Ascending aorta (tissue), 2 donors: ENCODE measurements at regions of chr7 and their contacts with region 1.

Region 1: GRCh38 chr7:75994388-75995051 is at the start of gene TMEM120A:
- DNase-seq: peak; percentile 84 to 98
- H3K4me3 ChIP-seq: peak within 1 kb of the TSS; percentile 92 to 93
- H3K27ac ChIP-seq: peak within 1 kb of the TSS; percentile 99 to 100
- H3K4me1 ChIP-seq: peaks cover 10 to 25% of the 10 kb centered on the region in 2 donors
- H3K27me3 ChIP-seq: no peaks in the 10 kb centered on the region
- CTCF ChIP-seq: peak; percentile 29 to 42 (median 31)
- total RNA-seq, gene TMEM120A: 24.2 TPM

Region 2: DNA sequence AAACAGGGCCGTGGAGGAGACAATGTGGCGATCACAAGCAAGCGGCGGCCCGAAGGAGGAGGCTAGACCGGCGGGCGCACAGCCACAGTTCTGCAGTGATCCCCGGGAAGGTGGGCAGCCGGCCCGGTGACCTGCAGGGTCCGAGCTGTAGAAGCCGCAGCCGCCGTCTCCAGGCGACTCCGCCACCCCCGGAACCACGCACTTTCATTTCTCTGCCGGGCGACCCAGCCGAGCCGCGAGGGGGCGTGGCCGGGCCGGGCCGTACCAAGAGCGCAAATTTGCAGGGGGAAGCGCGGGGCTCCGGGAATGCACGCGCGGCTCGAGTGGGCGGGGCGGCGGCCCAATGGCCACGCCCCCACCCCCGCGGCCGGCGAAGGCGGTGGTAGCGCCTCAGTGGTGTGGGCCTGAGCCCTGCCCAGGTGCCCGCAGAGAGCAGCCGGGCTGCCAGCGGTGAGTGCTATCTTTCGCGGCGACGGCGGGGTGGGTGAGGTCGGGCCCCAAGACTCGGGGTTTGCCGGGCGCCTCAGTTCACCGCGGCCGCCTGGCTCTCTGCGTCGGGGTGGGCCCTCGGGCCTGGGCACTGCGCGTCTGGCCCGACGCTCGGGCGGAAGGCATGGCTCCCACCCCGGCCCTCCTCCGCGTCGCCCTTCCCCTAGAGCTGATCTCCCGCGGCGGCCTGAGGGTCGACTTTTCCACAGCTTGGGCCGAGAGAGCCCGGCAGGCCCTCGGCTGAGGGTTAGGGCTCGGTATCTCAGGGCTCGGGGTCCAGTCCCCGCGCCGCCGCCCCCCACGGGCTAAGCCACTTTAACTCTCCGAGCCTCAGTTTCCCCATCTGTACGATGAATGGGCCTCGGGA is 79.6 kb before region 1 on chr7 and contains the start of gene POR:
- intact Hi-C with region 1: loop called (anchors 1 kb)
- DNase-seq: peak; percentile 80 to 96
- H3K4me3 ChIP-seq: peak within 1 kb of the TSS; percentile 81 to 84
- H3K27ac ChIP-seq: peak within 1 kb of the TSS; percentile 81 to 84
- H3K4me1 ChIP-seq: peaks cover 3 to 5% of the 10 kb centered on the region in 2 donors
- H3K27me3 ChIP-seq: no peaks in the 10 kb centered on the region
- CTCF ChIP-seq: peak in 2 of 3 experiments; percentile 3 to 11
- total RNA-seq, gene POR: 236 TPM

Region 3: DNA sequence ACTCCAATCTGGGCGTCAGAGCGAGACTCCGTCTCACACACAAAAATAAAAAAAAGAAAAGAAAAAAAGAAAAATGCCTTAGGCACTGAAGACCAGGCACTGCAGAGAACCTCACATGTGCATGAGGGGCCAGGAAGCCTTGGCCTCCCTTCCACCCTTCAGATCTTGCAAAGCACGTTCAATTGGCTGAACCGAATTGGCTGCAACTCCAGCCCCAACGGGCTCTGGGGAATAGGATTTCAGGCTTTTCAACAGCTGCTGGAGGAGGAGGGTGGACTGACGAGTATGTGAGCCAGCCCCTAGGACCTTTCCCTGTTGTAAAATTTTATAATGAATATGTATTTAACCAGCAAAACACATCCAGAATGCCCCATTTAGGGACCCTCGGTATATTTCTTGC is 16.8 kb before region 1 on chr7:
- intact Hi-C with region 1: no loop called
- DNase-seq: peak in 1 of 2 donors; percentile 79
- H3K4me3 ChIP-seq: no peak overlapping the region
- H3K27ac ChIP-seq: no peak overlapping the region
- H3K4me1 ChIP-seq: no peaks in the 10 kb centered on the region
- H3K27me3 ChIP-seq: no peaks in the 10 kb centered on the region
- CTCF ChIP-seq: no peak

Region 4: DNA sequence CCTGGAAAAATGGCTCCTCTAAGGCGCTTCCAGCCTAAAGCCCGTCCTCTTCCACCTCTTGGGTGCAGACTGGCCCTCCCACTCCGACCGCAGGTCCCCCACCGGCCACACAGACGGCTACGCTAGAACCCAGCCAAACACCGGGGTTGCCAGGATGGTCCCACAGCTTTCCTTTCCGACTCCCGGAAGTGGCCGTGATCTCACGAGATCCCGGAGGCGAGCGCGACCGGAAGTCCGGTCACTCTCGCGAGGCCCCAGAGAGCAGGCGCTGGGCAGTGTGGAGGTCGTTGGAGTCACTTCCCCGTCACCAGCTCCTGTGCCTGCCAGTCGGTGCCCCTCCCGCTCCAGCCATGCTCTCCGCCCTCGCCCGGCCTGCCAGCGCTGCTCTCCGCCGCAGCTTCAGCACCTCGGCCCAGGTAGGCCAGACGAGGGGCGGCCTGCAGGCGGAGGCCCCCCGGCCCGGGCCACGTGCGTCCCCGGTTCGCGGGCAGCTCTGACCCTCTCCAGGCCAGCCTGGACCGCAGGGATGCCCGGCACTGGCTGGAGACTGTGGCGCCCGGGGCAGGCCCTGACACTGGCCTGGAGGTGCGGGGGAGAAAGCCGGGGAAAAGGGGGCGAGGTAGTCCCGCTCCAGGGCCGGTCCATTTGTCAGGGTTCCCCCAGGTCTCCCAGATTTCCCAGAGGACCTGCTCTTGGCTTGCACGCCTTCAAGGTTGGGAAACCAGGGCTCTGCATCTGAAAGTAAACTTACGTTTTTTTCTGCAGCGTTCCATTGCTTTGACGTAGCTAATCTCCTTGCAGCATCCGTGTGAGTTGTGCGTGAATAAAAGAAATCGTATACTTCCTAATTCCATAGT is 53.5 kb after region 1 on chr7 and contains the starts of genes MDH2 and STYXL1:
- intact Hi-C with region 1: loop called (anchors 2 kb)
- DNase-seq: peak; percentile 88 to 98
- H3K4me3 ChIP-seq: peak within 1 kb of the TSS; percentile 93 to 99
- H3K27ac ChIP-seq: peak within 1 kb of the TSS; percentile 84 to 96
- H3K4me1 ChIP-seq: peaks cover 0 to 19% of the 10 kb centered on the region in 2 donors
- H3K27me3 ChIP-seq: no peaks in the 10 kb centered on the region
- CTCF ChIP-seq: no peak
- total RNA-seq, gene MDH2: 63.5 TPM
- total RNA-seq, gene STYXL1: 0.96 TPM

Region 5: GRCh38 chr7:76515999-76516443 is 521.5 kb after region 1 on chr7:
- intact Hi-C with region 1: no loop called
- DNase-seq: no peak
- H3K4me3 ChIP-seq: no peak overlapping the region
- H3K27ac ChIP-seq: no peak overlapping the region
- H3K4me1 ChIP-seq: no peaks in the 10 kb centered on the region
- H3K27me3 ChIP-seq: no peaks in the 10 kb centered on the region
- CTCF ChIP-seq: peak in 1 of 3 experiments; percentile 74